Endothelial cell of umbilical vein (primary cell): ENCODE measurements at regions of chr7 and their contacts with region 1.

Region 1: GRCh38 chr7:117399820-117400422 is 27.4 kb downstream of the ASZ1 start:
- DNase-seq: no peak
- H3K4me3 ChIP-seq: no peak overlapping the region
- H3K27ac ChIP-seq: no peak overlapping the region
- H3K4me1 ChIP-seq: no peaks in the 10 kb centered on the region
- H3K27me3 ChIP-seq: peaks cover 4 to 6% of the 10 kb centered on the region in 2 experiments
- CTCF ChIP-seq: peak in 1 of 2 donors; percentile 13
- POLR2A ChIP-seq: no peak

Region 2: DNA sequence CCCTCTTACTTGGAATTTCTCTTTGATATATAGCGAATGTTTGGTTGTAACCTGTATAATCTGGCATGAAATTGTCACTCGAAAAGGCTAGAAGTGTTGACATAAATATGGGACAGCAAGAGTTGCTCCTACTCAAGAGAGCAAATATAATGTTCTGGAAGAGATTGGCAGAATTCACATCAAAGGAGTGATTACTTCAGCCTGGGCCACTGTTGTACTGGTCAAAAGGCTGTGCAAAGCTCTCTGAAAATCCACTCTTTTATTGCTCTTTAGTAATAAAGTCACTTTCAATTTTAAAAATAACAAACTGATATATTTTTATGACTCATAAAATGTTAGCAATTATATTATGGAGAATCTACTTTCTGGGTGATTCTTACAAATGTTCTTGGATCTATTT is 138.1 kb after region 1 on chr7:
- CTCF ChIA-PET with region 1: no interaction called
- POLR2A ChIA-PET with region 1: no interaction called
- dilution Hi-C with region 1: no loop called
- intact Hi-C with region 1: no loop called
- DNase-seq: no peak
- H3K4me3 ChIP-seq: no peak overlapping the region
- H3K27ac ChIP-seq: no peak overlapping the region
- H3K4me1 ChIP-seq: no peaks in the 10 kb centered on the region
- H3K27me3 ChIP-seq: no peaks in the 10 kb centered on the region
- CTCF ChIP-seq: no peak
- POLR2A ChIP-seq: no peak

Region 3: GRCh38 chr7:117673839-117674238 is 273.9 kb after region 1 on chr7:
- CTCF ChIA-PET with region 1: interaction called, 4 read pairs
- POLR2A ChIA-PET with region 1: no interaction called
- dilution Hi-C with region 1: no loop called
- intact Hi-C with region 1: loop called (anchors 2 kb)
- DNase-seq: peak; percentile 56
- H3K4me3 ChIP-seq: no peak overlapping the region
- H3K27ac ChIP-seq: no peak overlapping the region
- H3K4me1 ChIP-seq: no peaks in the 10 kb centered on the region
- H3K27me3 ChIP-seq: peaks cover 0 to 2% of the 10 kb centered on the region in 2 experiments
- CTCF ChIP-seq: peak; percentile 16 to 28
- POLR2A ChIP-seq: no peak

Region 4: GRCh38 chr7:117780832-117781231 is 380.9 kb after region 1 on chr7:
- CTCF ChIA-PET with region 1: no interaction called
- POLR2A ChIA-PET with region 1: no interaction called
- dilution Hi-C with region 1: no loop called
- intact Hi-C with region 1: no loop called
- DNase-seq: no peak
- H3K4me3 ChIP-seq: no peak overlapping the region
- H3K27ac ChIP-seq: no peak overlapping the region
- H3K4me1 ChIP-seq: no peaks in the 10 kb centered on the region
- H3K27me3 ChIP-seq: no peaks in the 10 kb centered on the region
- CTCF ChIP-seq: no peak
- POLR2A ChIP-seq: no peak

Region 5: DNA sequence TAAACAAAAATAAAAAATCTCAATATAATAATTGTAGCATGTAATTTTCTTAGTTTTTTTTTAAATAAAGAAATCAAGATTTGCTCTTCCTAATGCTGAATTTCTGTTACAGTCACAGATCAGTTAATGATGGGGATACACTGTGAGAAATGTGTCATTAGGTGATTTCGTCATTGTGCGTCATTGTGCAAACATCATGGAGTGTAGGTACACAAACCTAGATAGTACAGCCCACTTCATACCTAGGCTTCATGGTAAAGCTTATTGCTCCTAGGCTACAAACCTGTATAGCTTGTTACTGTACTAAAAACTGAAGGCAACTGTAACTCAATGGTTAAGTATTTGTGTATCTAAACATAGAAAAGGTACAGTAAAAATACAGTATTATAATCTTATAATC is 709.7 kb after region 1 on chr7:
- CTCF ChIA-PET with region 1: no interaction called
- POLR2A ChIA-PET with region 1: no interaction called
- dilution Hi-C with region 1: no loop called
- intact Hi-C with region 1: no loop called
- DNase-seq: no peak
- H3K4me3 ChIP-seq: no peak overlapping the region
- H3K27ac ChIP-seq: no peak overlapping the region
- H3K4me1 ChIP-seq: no peaks in the 10 kb centered on the region
- H3K27me3 ChIP-seq: no peaks in the 10 kb centered on the region
- CTCF ChIP-seq: no peak
- POLR2A ChIP-seq: no peak

Region 6: DNA sequence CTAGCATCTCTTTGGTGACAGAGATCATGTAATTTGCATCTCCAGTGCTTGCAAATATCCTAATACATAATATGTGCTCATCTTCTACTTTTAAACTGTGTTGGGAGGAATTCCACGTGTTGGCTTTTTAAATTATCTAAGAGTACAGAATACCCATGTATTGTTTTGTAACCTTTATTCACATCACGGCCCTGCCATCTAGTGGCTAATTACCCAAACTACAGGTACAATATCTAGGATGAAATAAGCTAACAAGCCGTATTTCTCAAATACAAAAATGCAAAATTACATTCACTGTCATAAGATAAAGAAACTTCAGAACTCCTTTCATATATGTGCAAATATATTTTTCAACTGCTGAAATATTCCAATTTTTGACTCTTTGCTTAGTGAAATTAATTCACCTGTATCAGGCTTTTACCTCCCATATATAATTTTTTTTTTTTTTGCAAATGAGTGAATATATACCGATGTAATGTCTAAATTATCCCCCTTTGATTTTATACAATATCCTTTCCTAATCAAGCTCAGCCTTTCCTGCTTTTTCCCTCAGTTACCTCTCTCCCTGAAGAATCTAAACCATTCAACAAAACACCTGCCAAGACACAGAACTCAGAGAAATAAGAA is 753.7 kb after region 1 on chr7:
- CTCF ChIA-PET with region 1: interaction called, 14 read pairs
- POLR2A ChIA-PET with region 1: no interaction called
- dilution Hi-C with region 1: no loop called
- intact Hi-C with region 1: no loop called
- DNase-seq: peak; percentile 57
- H3K4me3 ChIP-seq: no peak overlapping the region
- H3K27ac ChIP-seq: no peak overlapping the region
- H3K4me1 ChIP-seq: no peaks in the 10 kb centered on the region
- H3K27me3 ChIP-seq: peaks cover 0 to 6% of the 10 kb centered on the region in 2 experiments
- CTCF ChIP-seq: peak in 1 of 2 donors; percentile 40
- POLR2A ChIP-seq: no peak